ENCODE measurements at regions of chr6 and their contacts with region 1.

Region 1: DNA sequence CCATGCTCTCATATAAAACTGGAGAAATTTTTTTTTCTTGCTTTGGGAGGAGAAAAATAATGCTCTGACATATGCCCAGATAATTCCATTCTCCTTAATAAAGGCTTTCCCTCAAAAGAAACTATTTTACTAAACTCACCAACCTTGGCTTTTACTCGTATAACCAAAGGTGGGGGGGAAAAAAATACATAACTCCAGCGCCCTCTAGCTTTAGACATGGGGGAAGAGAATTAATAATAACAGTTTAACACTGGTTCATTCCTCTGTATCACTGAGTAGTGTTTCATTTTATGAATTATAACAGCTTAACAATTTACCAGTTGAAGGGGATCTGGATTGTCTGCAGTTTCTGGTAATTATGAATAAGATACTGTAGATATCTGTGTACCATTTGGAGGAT is 1226.1 kb downstream of the GRIK2 start:
- DNase-seq: peak; percentile 5
- ATAC-seq: peak; percentile 37; the same call in 1 of the 2 replicates
- H3K4me3 ChIP-seq: no peak overlapping the region
- H3K27ac ChIP-seq: no peak overlapping the region
- H3K4me1 ChIP-seq: no peaks in the 10 kb centered on the region
- H3K27me3 ChIP-seq: no peaks in the 10 kb centered on the region
- CTCF ChIP-seq: peak; percentile 67

Region 2: DNA sequence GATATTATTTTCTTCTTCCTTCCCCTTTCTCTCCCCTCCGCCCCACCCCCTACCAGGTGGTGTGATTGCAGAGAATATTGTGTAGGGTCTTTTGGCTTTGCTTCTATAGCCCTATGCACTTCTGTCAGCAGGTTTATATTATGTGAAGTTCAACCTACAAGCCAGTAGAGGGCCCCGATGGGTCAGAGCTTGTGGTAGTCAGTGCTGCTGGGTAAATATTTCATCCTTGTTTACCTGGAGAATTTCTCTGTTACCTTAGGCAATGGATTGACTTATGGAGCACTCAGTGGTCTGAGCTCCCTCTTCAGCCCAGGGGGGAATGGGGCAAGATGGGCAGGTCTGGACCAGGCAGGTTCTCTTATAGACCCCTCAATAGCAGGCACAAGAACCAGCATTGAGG is 505.2 kb before region 1 on chr6:
- CTCF ChIA-PET with region 1: no interaction called
- POLR2A ChIA-PET with region 1: no interaction called
- intact Hi-C with region 1: loop called (anchors 5 kb)
- DNase-seq: peak; percentile 27
- ATAC-seq: peak; percentile 60
- H3K4me3 ChIP-seq: no peak overlapping the region
- H3K27ac ChIP-seq: no peak overlapping the region
- H3K4me1 ChIP-seq: no peaks in the 10 kb centered on the region
- H3K27me3 ChIP-seq: no peaks in the 10 kb centered on the region
- CTCF ChIP-seq: peak; percentile 53; the same call in 1 of the 2 replicates

Region 3: GRCh38 chr6:102389994-102390393 is 229.6 kb before region 1 on chr6:
- CTCF ChIA-PET with region 1: no interaction called
- POLR2A ChIA-PET with region 1: no interaction called
- intact Hi-C with region 1: loop called (anchors 10 kb)
- DNase-seq: no peak
- ATAC-seq: no peak
- H3K4me3 ChIP-seq: no peak overlapping the region
- H3K27ac ChIP-seq: no peak overlapping the region
- H3K4me1 ChIP-seq: peaks cover 14% of the 10 kb centered on the region
- H3K27me3 ChIP-seq: no peaks in the 10 kb centered on the region
- CTCF ChIP-seq: no peak